ENCODE measurements at regions of chr13 and their contacts with region 1.

Region 1: GRCh38 chr13:51583875-51584730 is at the start of gene WDFY2:
- DNase-seq: peak; percentile 100
- ATAC-seq: peak; percentile 80
- H3K4me3 ChIP-seq: peak within 1 kb of the TSS; percentile 68 to 94 (median 91)
- H3K4me3 Mint-ChIP-seq: peak within 1 kb of the TSS; percentile 97
- H3K27ac ChIP-seq: peak within 1 kb of the TSS; percentile 81 to 88
- H3K27ac Mint-ChIP-seq: peak within 1 kb of the TSS; percentile 98
- H3K4me1 ChIP-seq: peaks cover 12 to 14% of the 10 kb centered on the region in 2 donors
- H3K4me1 Mint-ChIP-seq: peaks cover 35% of the 10 kb centered on the region
- H3K27me3 ChIP-seq: no peaks in the 10 kb centered on the region
- H3K27me3 Mint-ChIP-seq: no peaks in the 10 kb centered on the region
- CTCF ChIP-seq: no peak
- total RNA-seq, gene WDFY2: 46.1 and 47.7 TPM in 2 replicates

Region 2: GRCh38 chr13:49792550-49793324 is 1791.4 kb before region 1 on chr13 and contains the start of gene KPNA3:
- CTCF ChIA-PET with region 1: no interaction called
- POLR2A ChIA-PET with region 1: no interaction called
- intact Hi-C with region 1: loop called (anchors 5 kb)
- DNase-seq: peak; percentile 97
- ATAC-seq: peak; percentile 87
- H3K4me3 ChIP-seq: peak within 1 kb of the TSS; percentile 79 to 88 (median 80)
- H3K4me3 Mint-ChIP-seq: peak within 1 kb of the TSS; percentile 97
- H3K27ac ChIP-seq: peak within 1 kb of the TSS; percentile 85 to 91
- H3K27ac Mint-ChIP-seq: peak within 1 kb of the TSS; percentile 99
- H3K4me1 ChIP-seq: peaks cover 20 to 21% of the 10 kb centered on the region in 2 donors
- H3K4me1 Mint-ChIP-seq: peaks cover 34% of the 10 kb centered on the region
- H3K27me3 ChIP-seq: no peaks in the 10 kb centered on the region
- H3K27me3 Mint-ChIP-seq: peaks cover 4% of the 10 kb centered on the region
- CTCF ChIP-seq: no peak
- total RNA-seq, gene KPNA3: 19.0 and 19.7 TPM in 2 replicates

Region 3: GRCh38 chr13:51645154-51645650 is 61.1 kb after region 1 on chr13:
- CTCF ChIA-PET with region 1: no interaction called
- POLR2A ChIA-PET with region 1: interaction called, 6 read pairs
- intact Hi-C with region 1: loop called (anchors 1 kb)
- DNase-seq: peak; percentile 79
- ATAC-seq: peak; percentile 79
- H3K4me3 ChIP-seq: peak overlapping the region in 2 of 5 experiments; percentile 16 to 42
- H3K4me3 Mint-ChIP-seq: peak overlapping the region; percentile 70
- H3K27ac ChIP-seq: peak overlapping the region; percentile 83 to 91
- H3K27ac Mint-ChIP-seq: peak overlapping the region; percentile 88
- H3K4me1 ChIP-seq: peaks cover 39 to 42% of the 10 kb centered on the region in 2 donors
- H3K4me1 Mint-ChIP-seq: peaks cover 60% of the 10 kb centered on the region
- H3K27me3 ChIP-seq: no peaks in the 10 kb centered on the region
- H3K27me3 Mint-ChIP-seq: no peaks in the 10 kb centered on the region
- CTCF ChIP-seq: no peak

Region 4: GRCh38 chr13:51803422-51804294 is 219.6 kb after region 1 on chr13 and contains the start of gene DHRS12:
- CTCF ChIA-PET with region 1: no interaction called
- POLR2A ChIA-PET with region 1: no interaction called
- intact Hi-C with region 1: loop called (anchors 1 kb)
- DNase-seq: peak; percentile 95
- ATAC-seq: peak; percentile 84
- H3K4me3 ChIP-seq: peak within 1 kb of the TSS; percentile 64 to 94 (median 72)
- H3K4me3 Mint-ChIP-seq: peak within 1 kb of the TSS; percentile 99
- H3K27ac ChIP-seq: peak within 1 kb of the TSS; percentile 98
- H3K27ac Mint-ChIP-seq: peak within 1 kb of the TSS; percentile 100
- H3K4me1 ChIP-seq: peaks cover 19 to 27% of the 10 kb centered on the region in 2 donors
- H3K4me1 Mint-ChIP-seq: peaks cover 38% of the 10 kb centered on the region
- H3K27me3 ChIP-seq: no peaks in the 10 kb centered on the region
- H3K27me3 Mint-ChIP-seq: no peaks in the 10 kb centered on the region
- CTCF ChIP-seq: no peak
- total RNA-seq, gene DHRS12: 23.2 TPM in 2 replicates

Region 5: DNA sequence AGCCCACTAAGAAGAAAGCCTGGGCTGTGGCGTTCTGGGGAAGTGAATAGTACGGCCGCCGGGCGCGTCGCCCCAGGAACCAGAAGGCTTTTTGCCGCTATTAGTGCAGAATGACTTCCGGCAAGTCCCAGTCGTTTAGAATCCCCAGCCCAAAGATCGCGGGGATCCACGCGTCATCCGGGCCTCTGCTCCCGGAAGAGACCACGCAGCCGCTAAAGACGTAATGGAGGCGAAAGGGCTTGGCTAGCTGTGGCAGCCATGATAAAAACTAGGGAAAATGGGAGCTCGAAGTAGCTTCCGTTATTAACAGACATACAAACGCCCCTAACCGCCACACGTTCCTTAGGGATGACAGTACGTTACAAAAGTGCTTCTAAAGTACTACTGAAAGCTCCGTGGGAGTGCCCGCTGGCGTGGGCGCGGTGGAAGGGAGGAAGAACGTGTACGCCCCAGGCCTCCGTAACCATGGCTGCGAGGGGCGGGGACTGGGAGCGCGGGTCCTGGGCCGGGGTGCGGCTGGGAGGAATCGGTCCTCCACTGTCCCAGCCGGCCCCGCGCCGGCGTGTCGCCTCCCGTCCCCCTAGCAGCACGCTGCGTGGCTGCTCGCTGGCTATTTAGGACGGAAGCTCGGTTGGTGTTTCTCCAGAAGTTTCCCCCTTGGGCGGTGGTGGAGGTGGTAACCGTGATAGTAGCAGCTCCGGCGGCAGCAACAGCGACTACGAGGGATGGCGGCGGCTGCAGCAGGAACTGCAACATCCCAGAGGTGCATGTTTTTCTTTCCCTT is 1068.3 kb after region 1 on chr13 and contains the start of gene SUGT1:
- CTCF ChIA-PET with region 1: no interaction called
- POLR2A ChIA-PET with region 1: no interaction called
- intact Hi-C with region 1: loop called (anchors 10 kb)
- DNase-seq: peak; percentile 97
- ATAC-seq: peak; percentile 93
- H3K4me3 ChIP-seq: peak within 1 kb of the TSS; percentile 63 to 97 (median 95)
- H3K4me3 Mint-ChIP-seq: no peak within 1 kb of the TSS
- H3K27ac ChIP-seq: peak within 1 kb of the TSS; percentile 93 to 98
- H3K27ac Mint-ChIP-seq: no peak within 1 kb of the TSS
- H3K4me1 ChIP-seq: peaks cover 8 to 25% of the 10 kb centered on the region in 2 donors
- H3K4me1 Mint-ChIP-seq: peaks cover 11% of the 10 kb centered on the region
- H3K27me3 ChIP-seq: no peaks in the 10 kb centered on the region
- H3K27me3 Mint-ChIP-seq: no peaks in the 10 kb centered on the region
- CTCF ChIP-seq: peak; percentile 75
- total RNA-seq, gene SUGT1: 38.2 and 38.4 TPM in 2 replicates

Measured in B cell (primary cell).